ENCODE measurements at regions of chr17 and their contacts with region 1.

Region 1: GRCh38 chr17:72725433-72726068 is 366.9 kb downstream of the SLC39A11 start:
- DNase-seq: no peak
- ATAC-seq: peak; percentile 59
- H3K4me3 ChIP-seq: no peak overlapping the region
- H3K27ac ChIP-seq: no peak overlapping the region
- H3K4me1 ChIP-seq: peaks cover 18% of the 10 kb centered on the region
- H3K27me3 ChIP-seq: no peaks in the 10 kb centered on the region
- CTCF ChIP-seq: peak; percentile 62 to 87 (median 75)
- EP300 ChIP-seq: no peak
- POLR2A ChIP-seq: no peak
- RAD21 ChIP-seq: peak; percentile 84

Region 2: DNA sequence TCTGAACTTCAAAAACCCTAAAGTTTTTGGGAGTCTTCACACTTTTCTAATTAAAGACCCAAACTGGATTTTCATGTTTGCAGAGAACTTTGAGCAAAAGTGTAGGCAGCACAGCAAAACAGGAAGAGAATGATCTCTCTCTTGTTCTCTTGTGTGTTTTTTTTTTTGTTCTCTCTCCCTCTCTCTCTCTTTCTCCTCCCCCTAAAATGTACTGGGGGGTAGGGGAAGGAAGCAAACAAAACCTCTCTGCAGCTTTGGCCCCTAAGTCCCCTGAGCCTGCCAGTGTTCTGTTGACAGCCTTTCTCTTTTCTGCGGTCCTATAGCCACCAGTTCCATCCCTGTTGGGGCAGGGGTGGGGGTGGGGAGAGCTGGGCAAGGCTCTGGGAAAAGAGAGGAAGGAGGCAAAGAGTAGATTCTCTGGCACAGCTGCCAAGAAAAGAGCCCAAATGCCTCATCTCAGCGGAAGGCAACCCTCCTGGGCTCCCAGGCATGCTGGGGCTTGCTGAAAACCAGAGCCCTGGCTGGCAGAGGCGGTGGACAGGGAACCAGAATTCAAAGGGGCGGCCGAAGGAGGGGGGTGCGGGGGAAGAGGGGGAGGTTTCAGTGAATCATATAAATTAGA is 309.4 kb before region 1 on chr17:
- CTCF ChIA-PET with region 1: no interaction called
- POLR2A ChIA-PET with region 1: no interaction called
- RAD21 ChIA-PET with region 1: no interaction called
- SMC1A ChIA-PET with region 1: no interaction called
- in situ Hi-C with region 1: no loop called
- intact Hi-C with region 1: no loop called
- DNase-seq: peak; percentile 20
- ATAC-seq: no peak
- H3K4me3 ChIP-seq: no peak overlapping the region
- H3K27ac ChIP-seq: no peak overlapping the region
- H3K4me1 ChIP-seq: peaks cover 25% of the 10 kb centered on the region
- H3K27me3 ChIP-seq: no peaks in the 10 kb centered on the region
- CTCF ChIP-seq: no peak
- EP300 ChIP-seq: no peak
- POLR2A ChIP-seq: no peak
- RAD21 ChIP-seq: no peak

Region 3: GRCh38 chr17:72479113-72479512 is 246.4 kb before region 1 on chr17:
- CTCF ChIA-PET with region 1: no interaction called
- POLR2A ChIA-PET with region 1: no interaction called
- RAD21 ChIA-PET with region 1: no interaction called
- SMC1A ChIA-PET with region 1: no interaction called
- in situ Hi-C with region 1: no loop called
- intact Hi-C with region 1: no loop called
- DNase-seq: no peak
- ATAC-seq: peak; percentile 64
- H3K4me3 ChIP-seq: no peak overlapping the region
- H3K27ac ChIP-seq: no peak overlapping the region
- H3K4me1 ChIP-seq: no peaks in the 10 kb centered on the region
- H3K27me3 ChIP-seq: no peaks in the 10 kb centered on the region
- CTCF ChIP-seq: peak; percentile 16 to 30 (median 16); a peak in 3 of 6 replicates
- EP300 ChIP-seq: no peak
- POLR2A ChIP-seq: no peak
- RAD21 ChIP-seq: peak; percentile 47; the same call in 1 of the 2 replicates

Region 4: DNA sequence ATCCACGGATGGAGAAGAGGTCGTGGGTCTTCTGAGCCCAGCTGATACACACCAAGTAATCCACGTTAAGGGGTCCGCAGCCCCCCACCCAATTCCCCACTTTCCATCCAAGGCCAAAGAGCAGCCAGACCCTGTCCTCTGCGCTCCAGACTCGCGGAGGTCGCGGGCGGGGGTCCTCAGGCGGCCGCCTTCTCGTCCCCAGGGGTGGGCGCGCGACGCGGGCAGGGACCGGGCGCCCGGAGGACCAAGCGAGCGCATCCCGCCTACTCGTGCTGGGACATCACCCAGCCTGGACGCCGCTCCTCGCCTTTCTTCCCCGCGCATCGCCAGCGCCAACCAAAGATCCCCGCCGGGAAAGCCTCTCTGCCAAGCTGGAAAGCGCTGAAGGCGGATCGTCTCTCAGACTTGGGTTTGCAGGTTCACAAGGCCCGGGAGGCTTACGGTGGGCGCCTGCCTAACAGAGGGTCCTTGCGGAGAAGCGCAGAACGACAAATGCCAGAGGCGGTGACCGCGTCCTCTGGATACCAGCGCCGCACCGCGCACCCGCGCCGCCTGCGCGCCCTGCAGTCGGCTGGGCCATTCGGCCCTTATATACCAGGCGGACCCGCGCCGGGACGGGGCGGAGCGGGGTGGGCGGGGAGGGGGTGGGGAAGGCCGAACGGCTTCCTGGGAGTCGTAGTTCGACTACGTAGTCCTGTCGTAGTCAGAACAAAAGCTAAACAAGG is 133.1 kb before region 1 on chr17:
- CTCF ChIA-PET with region 1: interaction called, 50 read pairs
- POLR2A ChIA-PET with region 1: interaction called, 5 read pairs
- RAD21 ChIA-PET with region 1: interaction called, 21 read pairs
- SMC1A ChIA-PET with region 1: interaction called, 29 read pairs
- in situ Hi-C with region 1: no loop called
- intact Hi-C with region 1: no loop called
- DNase-seq: no peak
- ATAC-seq: peak; percentile 82
- H3K4me3 ChIP-seq: peak overlapping the region; percentile 59
- H3K27ac ChIP-seq: no peak overlapping the region
- H3K4me1 ChIP-seq: 0 out of 2 replicates have a peak, but pooled peaks cover 3% of the 10 kb centered on the region
- H3K27me3 ChIP-seq: no peaks in the 10 kb centered on the region; a peak in 2 of 4 replicates
- CTCF ChIP-seq: no peak
- EP300 ChIP-seq: no peak
- POLR2A ChIP-seq: peak; percentile 90
- RAD21 ChIP-seq: no peak

Region 5: DNA sequence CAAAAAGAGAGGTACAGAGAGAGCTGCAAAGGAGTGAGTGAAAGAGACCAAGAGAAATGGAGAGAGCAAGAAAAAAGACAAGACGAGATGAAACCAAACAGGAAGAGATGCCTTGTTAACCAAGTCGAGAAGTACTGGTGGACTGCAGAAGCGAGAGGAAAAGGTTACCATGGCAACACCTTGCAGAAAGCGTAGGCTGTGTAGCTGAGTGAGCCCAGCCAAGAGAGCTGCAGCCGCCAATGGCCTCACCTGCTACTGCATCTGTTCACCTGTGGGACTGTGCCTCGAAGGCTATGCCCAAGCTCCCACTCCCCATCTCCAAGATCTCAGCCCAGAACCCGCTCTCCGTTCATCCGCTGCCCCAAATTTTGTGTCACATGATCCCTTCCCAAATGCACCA is 205.6 kb after region 1 on chr17:
- CTCF ChIA-PET with region 1: interaction called, 10 read pairs
- POLR2A ChIA-PET with region 1: no interaction called
- RAD21 ChIA-PET with region 1: interaction called, 28 read pairs
- SMC1A ChIA-PET with region 1: interaction called, 9 read pairs
- in situ Hi-C with region 1: no loop called
- intact Hi-C with region 1: no loop called
- DNase-seq: peak; percentile 25
- ATAC-seq: peak; percentile 68
- H3K4me3 ChIP-seq: no peak overlapping the region
- H3K27ac ChIP-seq: no peak overlapping the region
- H3K4me1 ChIP-seq: peaks cover 6% of the 10 kb centered on the region; the same call in 1 of the 2 replicates
- H3K27me3 ChIP-seq: no peaks in the 10 kb centered on the region
- CTCF ChIP-seq: no peak
- EP300 ChIP-seq: no peak
- POLR2A ChIP-seq: no peak
- RAD21 ChIP-seq: no peak

Region 6: GRCh38 chr17:73166731-73167581 is 441.4 kb after region 1 on chr17:
- CTCF ChIA-PET with region 1: interaction called, 30 read pairs
- POLR2A ChIA-PET with region 1: no interaction called
- RAD21 ChIA-PET with region 1: interaction called, 48 read pairs
- SMC1A ChIA-PET with region 1: interaction called, 35 read pairs
- in situ Hi-C with region 1: no loop called
- intact Hi-C with region 1: no loop called
- DNase-seq: no peak
- ATAC-seq: peak; percentile 71
- H3K4me3 ChIP-seq: peak overlapping the region; percentile 82
- H3K27ac ChIP-seq: peak overlapping the region; percentile 51
- H3K4me1 ChIP-seq: peaks cover 34% of the 10 kb centered on the region
- H3K27me3 ChIP-seq: 0 out of 4 replicates have a peak, but pooled peaks cover 0 to 3% of the 10 kb centered on the region in 2 experiments
- CTCF ChIP-seq: no peak
- EP300 ChIP-seq: peak in 1 of 2 experiments; percentile 30; a peak in 1 of 4 replicates
- POLR2A ChIP-seq: no peak
- RAD21 ChIP-seq: no peak

Region 7: DNA sequence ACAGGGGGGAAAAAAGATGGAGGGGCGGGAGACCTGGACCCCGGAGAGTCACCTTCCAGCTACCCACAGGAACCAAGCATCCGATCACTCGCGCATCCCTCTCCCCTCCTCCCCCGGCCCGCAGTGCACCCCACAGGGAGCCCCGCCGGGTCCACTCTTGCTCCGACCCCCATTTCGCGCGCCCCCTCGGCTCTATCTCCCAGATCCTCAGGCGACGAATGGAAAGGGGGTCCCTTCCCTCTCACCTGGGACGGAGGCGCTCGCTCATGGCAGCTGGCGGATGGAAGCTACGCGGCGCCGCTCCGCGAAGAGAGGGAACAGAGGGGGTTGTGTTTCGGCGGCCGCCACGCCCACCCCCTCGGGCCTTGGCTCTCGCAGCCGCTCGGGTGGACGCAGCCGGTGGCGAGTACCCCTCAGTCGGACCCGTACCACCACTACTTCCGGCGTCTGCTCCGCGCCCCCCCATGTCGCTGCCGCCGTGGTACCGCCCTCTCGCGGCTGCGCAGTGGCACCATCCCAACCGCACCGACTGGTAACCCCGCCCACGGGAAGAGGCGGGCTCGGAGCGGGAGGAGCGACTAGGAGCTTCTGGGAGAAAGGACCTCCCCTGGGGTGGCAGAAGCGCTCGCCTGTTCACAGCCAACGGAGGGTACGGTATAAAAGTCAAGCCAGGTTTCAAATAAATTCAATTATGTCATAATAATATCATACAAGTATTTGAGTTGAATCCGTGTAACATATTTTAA is 506.5 kb after region 1 on chr17:
- CTCF ChIA-PET with region 1: interaction called, 32 read pairs
- POLR2A ChIA-PET with region 1: interaction called, 10 read pairs
- RAD21 ChIA-PET with region 1: interaction called, 21 read pairs
- SMC1A ChIA-PET with region 1: interaction called, 15 read pairs
- in situ Hi-C with region 1: no loop called
- intact Hi-C with region 1: loop called (anchors 1 kb)
- DNase-seq: peak; percentile 86
- ATAC-seq: peak; percentile 83
- H3K4me3 ChIP-seq: peak overlapping the region; percentile 87
- H3K27ac ChIP-seq: peak overlapping the region; percentile 89
- H3K4me1 ChIP-seq: peaks cover 20% of the 10 kb centered on the region
- H3K27me3 ChIP-seq: no peaks in the 10 kb centered on the region
- CTCF ChIP-seq: peak in 1 of 3 experiments; percentile 19; a peak in 2 of 6 replicates
- EP300 ChIP-seq: no peak; a peak in 1 of 4 replicates
- POLR2A ChIP-seq: peak; percentile 93
- RAD21 ChIP-seq: no peak

Region 8: DNA sequence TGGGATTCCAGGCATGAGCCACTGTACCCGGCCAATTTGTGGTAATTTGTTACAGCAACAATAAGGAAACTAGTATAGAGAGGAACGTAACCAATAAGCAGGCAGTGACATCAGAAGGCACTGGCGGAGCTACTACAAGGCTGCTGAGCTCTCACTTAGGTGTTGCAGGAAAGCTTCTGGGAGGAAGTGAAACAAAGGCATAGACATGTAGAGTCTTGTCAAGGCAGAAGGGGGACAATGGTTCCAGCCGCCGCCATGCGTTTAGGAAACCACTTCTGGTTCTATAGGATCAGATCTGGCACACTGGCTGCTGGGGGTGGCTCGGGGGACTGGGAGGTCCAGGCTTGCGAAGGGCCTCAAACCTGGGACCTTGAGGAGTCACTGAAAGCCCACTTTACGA is 545.5 kb after region 1 on chr17:
- CTCF ChIA-PET with region 1: interaction called, 4 read pairs
- POLR2A ChIA-PET with region 1: no interaction called
- RAD21 ChIA-PET with region 1: interaction called, 10 read pairs
- SMC1A ChIA-PET with region 1: interaction called, 16 read pairs
- in situ Hi-C with region 1: no loop called
- intact Hi-C with region 1: no loop called
- DNase-seq: peak; percentile 88
- ATAC-seq: peak; percentile 99
- H3K4me3 ChIP-seq: no peak overlapping the region
- H3K27ac ChIP-seq: peak overlapping the region; percentile 82
- H3K4me1 ChIP-seq: peaks cover 14% of the 10 kb centered on the region
- H3K27me3 ChIP-seq: no peaks in the 10 kb centered on the region
- CTCF ChIP-seq: no peak
- EP300 ChIP-seq: peak; percentile 74 to 88; a peak in 3 of 4 replicates
- POLR2A ChIP-seq: 0 out of 2 replicates have a peak, but pooled peaks have one; percentile 38
- RAD21 ChIP-seq: no peak